Right ventricle myocardium superior (tissue), 1 donor: ENCODE measurements at regions of chr10 and their contacts with region 1.

Region 1: GRCh38 chr10:28381903-28382347 is 79.1 kb upstream of the MPP7 start:
- DNase-seq: peak; percentile 77
- ATAC-seq: peak; percentile 96

Region 2: GRCh38 chr10:28250782-28251181 is 131.1 kb before region 1 on chr10:
- intact Hi-C with region 1: loop called (anchors 2 kb)
- DNase-seq: no peak
- ATAC-seq: peak; percentile 50